ENCODE measurements at regions of chr1 and their contacts with region 1.

Region 1: DNA sequence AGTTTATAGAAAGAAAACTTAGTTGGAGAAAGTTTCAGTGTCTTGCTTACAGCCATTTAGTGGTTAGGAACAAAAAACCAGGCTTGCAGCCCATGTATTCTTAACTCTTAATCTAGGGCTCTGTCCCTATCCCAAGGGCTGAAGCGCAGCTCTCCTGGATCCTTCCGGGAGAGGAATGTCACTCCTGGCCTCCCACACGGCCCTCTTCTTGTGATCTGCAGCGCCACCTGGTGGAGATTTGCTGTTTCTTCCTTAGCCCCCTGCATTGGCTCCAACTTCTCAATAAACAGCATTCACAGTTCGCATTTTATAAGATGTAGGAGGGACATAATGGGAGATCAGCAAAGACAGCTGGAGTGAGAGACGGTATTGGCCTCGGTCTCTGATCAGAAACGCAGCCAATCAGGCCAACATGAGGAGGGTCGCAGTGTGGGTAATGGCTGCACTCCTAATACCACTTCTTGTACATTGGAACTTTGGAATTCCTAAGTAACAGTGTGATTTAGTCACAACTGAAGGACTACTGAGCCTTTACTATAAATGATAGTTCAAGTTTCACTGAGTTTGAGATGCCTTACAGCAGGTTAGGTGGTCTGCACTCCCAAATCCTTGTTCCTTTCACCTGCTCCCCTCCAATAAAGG is 283.4 kb downstream of the ASTN1 start:
- DNase-seq: peak; percentile 56
- CTCF ChIP-seq: peak; percentile 87

Region 2: DNA sequence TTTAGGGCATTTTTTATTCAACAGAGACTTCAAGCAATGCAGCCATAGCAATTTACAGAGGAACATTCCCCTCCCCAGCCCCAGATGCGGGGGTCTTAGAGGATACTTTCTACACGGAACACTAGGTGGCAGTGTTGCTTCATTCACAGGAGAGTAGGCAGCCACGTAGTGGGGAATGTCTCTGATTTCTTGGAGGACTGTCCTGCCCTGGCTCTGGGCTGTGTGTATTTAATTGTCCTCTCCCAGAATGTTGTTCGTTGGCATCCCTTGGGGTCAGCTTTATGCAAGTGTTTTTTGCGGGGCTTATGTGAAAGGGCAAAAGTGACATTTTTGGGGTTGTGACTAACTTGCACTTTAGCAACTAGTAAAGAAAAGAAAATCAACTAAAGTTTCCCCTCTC is 321.2 kb before region 1 on chr1:
- in situ Hi-C with region 1: loop called (anchors 10 kb)
- DNase-seq: peak; percentile 64
- CTCF ChIP-seq: peak; percentile 79